ENCODE measurements at regions of chr11 and their contacts with region 1.

Region 1: DNA sequence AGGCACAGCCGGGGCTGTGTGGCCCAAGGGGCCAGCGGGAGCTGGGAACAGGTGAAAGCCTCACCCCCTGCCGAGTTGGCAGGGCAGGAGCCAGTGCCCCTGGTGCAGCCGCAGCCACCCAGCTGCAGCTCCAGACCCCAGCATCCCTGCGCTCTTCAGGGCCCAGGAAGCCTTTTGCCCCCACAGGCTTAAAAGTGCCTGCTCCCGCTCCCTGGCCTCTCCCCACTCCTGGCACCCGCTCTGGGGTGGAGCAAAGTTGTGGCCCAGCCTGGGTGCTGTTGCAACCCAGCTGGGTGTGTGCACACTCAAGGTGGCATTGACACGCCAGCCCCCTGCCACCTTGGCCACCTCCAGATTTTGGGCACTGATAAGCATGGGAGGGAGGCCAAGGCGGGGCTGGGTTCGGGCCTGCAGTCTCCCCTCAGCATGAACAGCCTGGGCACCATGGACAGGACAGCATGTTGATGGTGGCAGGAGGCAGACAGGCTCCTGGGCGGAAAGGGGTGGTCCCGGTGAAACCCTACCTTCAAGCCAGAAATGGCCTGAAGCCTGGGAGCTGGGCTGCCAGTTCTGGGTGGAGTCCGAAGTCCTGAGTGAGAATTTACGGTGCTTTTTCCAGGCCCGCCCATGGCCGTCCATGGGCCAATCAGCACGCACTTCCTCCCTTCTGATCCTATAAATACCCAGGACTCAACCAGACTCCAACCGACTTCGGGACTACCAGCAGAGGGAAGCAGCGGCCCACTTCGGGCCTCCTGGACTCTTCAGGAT is 23.5 kb upstream of the RNASEH2C start:
- DNase-seq: peak; percentile 34
- H3K27ac ChIP-seq: no peak overlapping the region
- CTCF ChIP-seq: 0 out of 2 replicates have a peak, but pooled peaks have one; percentile 14

Region 2: GRCh38 chr11:65817835-65818742 is 74.0 kb after region 1 on chr11:
- CTCF ChIA-PET with region 1: interaction called, 3 read pairs
- POLR2A ChIA-PET with region 1: interaction called, 12 read pairs
- DNase-seq: peak; percentile 86
- H3K27ac ChIP-seq: peak overlapping the region; percentile 81
- CTCF ChIP-seq: peak; percentile 99

Measured in RWPE1 (cell line).